Ovary (tissue), 10 donors: ENCODE measurements at regions of chr19 and their contacts with region 1.

Region 1: GRCh38 chr19:16035601-16036297 is 40.5 kb upstream of the TPM4 start:
- DNase-seq: no peak
- H3K4me3 ChIP-seq: no peak overlapping the region
- H3K27ac ChIP-seq: no peak overlapping the region
- H3K4me1 ChIP-seq: no peaks in the 10 kb centered on the region
- H3K27me3 ChIP-seq: no peaks in the 10 kb centered on the region
- CTCF ChIP-seq: no peak
- EP300 ChIP-seq: no peak
- POLR2A ChIP-seq: no peak

Region 2: DNA sequence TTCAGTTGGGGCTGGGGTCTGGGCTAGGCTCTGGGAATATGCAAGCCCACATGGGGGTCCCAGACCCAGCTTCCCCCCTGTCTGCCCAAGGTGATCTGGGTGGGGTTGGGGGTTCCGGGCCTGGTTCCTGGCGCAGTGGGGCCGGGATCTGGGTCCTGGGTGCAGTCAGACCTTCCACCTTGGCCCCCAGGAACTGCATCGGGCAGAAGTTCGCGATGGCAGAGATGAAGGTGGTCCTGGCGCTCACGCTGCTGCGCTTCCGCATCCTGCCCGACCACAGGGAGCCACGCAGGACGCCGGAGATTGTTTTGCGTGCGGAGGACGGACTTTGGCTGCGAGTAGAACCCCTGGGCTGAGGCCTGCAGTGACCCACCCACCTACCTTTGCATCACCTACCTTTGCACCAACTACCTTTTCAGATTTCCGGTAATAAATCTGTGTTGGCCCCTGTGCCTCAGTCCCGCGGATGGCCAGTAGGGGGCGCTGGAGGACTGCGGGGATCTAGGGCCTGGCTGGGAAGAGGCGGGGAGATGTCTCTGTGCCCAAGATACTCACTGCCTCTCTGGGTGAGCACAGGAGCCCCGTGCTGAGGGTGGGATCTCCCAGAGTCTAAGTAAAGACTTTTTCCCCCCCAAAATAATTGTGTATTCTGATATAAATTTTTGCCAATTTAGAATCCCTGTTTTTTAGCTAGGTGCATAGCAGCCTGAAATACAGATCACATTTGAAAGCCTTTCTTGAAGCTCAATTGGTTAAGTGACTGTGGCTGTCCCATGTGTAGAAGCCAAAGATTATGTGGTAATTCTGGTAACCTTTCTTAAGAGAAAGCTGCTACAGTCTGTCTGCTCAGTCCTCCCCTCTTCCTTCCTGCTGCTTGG is 406.5 kb before region 1 on chr19:
- intact Hi-C with region 1: loop called in 1 of 4 experiments (anchors 10 kb)
- DNase-seq: peak; percentile 57 to 84 (median 79)
- H3K4me3 ChIP-seq: no peak overlapping the region
- H3K27ac ChIP-seq: no peak overlapping the region
- H3K4me1 ChIP-seq: no peaks in the 10 kb centered on the region
- H3K27me3 ChIP-seq: no peaks in the 10 kb centered on the region
- CTCF ChIP-seq: peak; percentile 72 to 83 (median 83)
- EP300 ChIP-seq: no peak
- POLR2A ChIP-seq: no peak